A673 (cell line): ENCODE measurements at regions of chr1 and their contacts with region 1.

Region 1: GRCh38 chr1:162056043-162056442 is 13.4 kb upstream of the NOS1AP start:
- DNase-seq: peak; percentile 87
- H3K4me3 ChIP-seq: no peak overlapping the region
- H3K27ac ChIP-seq: peak overlapping the region; percentile 38
- H3K4me1 ChIP-seq: peaks cover 16% of the 10 kb centered on the region
- H3K27me3 ChIP-seq: no peaks in the 10 kb centered on the region
- CTCF ChIP-seq: peak; percentile 97

Region 2: GRCh38 chr1:161726596-161727457 is 329.2 kb before region 1 on chr1:
- CTCF ChIA-PET with region 1: no interaction called
- POLR2A ChIA-PET with region 1: no interaction called
- intact Hi-C with region 1: no loop called
- DNase-seq: peak; percentile 91
- H3K4me3 ChIP-seq: peak overlapping the region; percentile 88
- H3K27ac ChIP-seq: peak overlapping the region; percentile 78
- H3K4me1 ChIP-seq: no peaks in the 10 kb centered on the region
- H3K27me3 ChIP-seq: no peaks in the 10 kb centered on the region
- CTCF ChIP-seq: no peak

Region 3: GRCh38 chr1:161978011-161978790 is 77.8 kb before region 1 on chr1:
- CTCF ChIA-PET with region 1: no interaction called
- POLR2A ChIA-PET with region 1: no interaction called
- intact Hi-C with region 1: no loop called
- DNase-seq: no peak
- H3K4me3 ChIP-seq: no peak overlapping the region
- H3K27ac ChIP-seq: no peak overlapping the region
- H3K4me1 ChIP-seq: no peaks in the 10 kb centered on the region
- H3K27me3 ChIP-seq: no peaks in the 10 kb centered on the region
- CTCF ChIP-seq: no peak

Region 4: GRCh38 chr1:162168249-162168648 is 112.2 kb after region 1 on chr1:
- CTCF ChIA-PET with region 1: no interaction called
- POLR2A ChIA-PET with region 1: no interaction called
- intact Hi-C with region 1: loop called (anchors 5 kb)
- DNase-seq: no peak
- H3K4me3 ChIP-seq: no peak overlapping the region
- H3K27ac ChIP-seq: peak overlapping the region; percentile 78
- H3K4me1 ChIP-seq: peaks cover 70% of the 10 kb centered on the region
- H3K27me3 ChIP-seq: no peaks in the 10 kb centered on the region
- CTCF ChIP-seq: no peak

Region 5: GRCh38 chr1:162230096-162230495 is 174.1 kb after region 1 on chr1:
- CTCF ChIA-PET with region 1: interaction called, 6 read pairs
- POLR2A ChIA-PET with region 1: no interaction called
- intact Hi-C with region 1: loop called (anchors 2 kb)
- DNase-seq: peak; percentile 98
- H3K4me3 ChIP-seq: peak overlapping the region; percentile 4
- H3K27ac ChIP-seq: peak overlapping the region; percentile 92
- H3K4me1 ChIP-seq: peaks cover 74% of the 10 kb centered on the region
- H3K27me3 ChIP-seq: no peaks in the 10 kb centered on the region
- CTCF ChIP-seq: peak; percentile 70

Region 6: DNA sequence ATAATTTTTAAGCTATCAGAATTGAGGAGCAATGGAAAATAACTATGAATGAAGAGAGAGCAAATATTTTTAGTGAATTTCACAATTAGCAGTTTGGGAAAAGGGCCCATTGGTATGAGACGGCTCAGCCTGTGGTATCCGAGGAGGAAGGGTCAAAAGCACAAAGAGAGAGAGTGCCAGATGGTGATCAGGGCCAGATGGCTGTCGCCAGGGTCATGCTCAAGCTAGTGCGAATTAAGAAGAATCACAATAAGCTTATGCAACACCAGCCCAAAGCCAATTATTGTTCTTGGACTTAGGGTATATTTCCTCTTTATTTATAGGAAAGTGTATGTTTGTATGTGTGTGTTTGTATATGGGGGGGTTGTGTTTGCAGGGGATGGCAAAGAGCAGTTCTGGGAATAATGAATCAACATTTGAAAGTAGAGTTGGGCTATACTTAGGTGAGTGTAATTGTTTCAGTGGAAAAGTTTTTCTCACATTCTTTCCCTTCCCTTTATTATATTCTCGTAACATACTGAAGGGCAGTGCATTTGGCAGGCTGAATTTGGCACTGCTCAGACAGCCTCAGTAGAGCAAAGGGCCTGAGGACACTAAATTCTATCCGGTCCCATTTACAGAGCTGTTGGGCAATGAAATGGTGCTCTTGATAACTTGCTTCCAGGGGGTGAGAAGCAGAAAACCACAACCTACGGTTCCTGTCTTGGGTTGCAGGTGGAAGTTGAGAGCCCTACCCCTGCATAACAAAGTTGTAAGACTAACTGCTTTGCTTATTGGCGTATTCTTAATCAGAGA is 556.8 kb after region 1 on chr1:
- CTCF ChIA-PET with region 1: no interaction called
- POLR2A ChIA-PET with region 1: no interaction called
- intact Hi-C with region 1: loop called (anchors 10 kb)
- DNase-seq: no peak
- H3K4me3 ChIP-seq: no peak overlapping the region
- H3K27ac ChIP-seq: peak overlapping the region; percentile 11
- H3K4me1 ChIP-seq: peaks cover 15% of the 10 kb centered on the region
- H3K27me3 ChIP-seq: no peaks in the 10 kb centered on the region
- CTCF ChIP-seq: no peak

Region 7: DNA sequence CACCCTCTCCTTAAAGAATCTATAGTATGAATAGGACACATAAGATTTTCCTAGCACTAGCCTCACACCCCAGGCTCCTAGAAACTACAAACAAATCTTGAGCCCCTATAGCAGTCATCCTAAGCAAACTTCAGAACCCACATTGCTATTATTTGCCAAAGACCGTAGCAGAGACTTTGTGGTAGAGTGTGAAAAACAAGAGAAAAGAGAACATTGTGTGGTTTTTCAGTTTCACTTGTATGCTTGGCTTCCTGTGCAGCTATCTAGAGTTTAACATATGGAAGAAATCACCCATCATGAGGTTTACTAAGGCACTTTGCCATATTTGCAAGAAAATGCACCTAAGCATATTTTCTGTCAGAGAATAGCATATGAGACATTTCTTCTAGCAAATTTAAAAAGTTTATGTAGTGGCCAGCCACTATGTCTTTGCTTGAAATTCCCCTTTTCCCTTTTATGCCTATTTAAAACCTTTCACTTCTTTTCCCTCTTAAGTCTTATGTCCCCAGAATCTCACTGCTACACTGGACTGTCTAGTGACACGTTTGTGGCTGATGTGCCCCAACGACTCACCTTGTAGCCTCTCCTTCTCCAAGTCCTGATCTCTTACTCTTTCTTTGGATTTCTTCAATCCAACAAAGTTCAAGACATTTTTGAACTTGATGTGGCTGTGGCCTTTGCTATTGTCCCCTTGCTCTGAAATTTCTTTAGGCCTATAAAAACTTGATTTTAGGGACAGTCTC is 779.3 kb after region 1 on chr1:
- CTCF ChIA-PET with region 1: no interaction called
- POLR2A ChIA-PET with region 1: no interaction called
- intact Hi-C with region 1: loop called (anchors 10 kb)
- DNase-seq: no peak
- H3K4me3 ChIP-seq: no peak overlapping the region
- H3K27ac ChIP-seq: no peak overlapping the region
- H3K4me1 ChIP-seq: peaks cover 7% of the 10 kb centered on the region
- H3K27me3 ChIP-seq: no peaks in the 10 kb centered on the region
- CTCF ChIP-seq: no peak